A549 (cell line): ENCODE measurements at regions of chr9 and their contacts with region 1.

Region 1: DNA sequence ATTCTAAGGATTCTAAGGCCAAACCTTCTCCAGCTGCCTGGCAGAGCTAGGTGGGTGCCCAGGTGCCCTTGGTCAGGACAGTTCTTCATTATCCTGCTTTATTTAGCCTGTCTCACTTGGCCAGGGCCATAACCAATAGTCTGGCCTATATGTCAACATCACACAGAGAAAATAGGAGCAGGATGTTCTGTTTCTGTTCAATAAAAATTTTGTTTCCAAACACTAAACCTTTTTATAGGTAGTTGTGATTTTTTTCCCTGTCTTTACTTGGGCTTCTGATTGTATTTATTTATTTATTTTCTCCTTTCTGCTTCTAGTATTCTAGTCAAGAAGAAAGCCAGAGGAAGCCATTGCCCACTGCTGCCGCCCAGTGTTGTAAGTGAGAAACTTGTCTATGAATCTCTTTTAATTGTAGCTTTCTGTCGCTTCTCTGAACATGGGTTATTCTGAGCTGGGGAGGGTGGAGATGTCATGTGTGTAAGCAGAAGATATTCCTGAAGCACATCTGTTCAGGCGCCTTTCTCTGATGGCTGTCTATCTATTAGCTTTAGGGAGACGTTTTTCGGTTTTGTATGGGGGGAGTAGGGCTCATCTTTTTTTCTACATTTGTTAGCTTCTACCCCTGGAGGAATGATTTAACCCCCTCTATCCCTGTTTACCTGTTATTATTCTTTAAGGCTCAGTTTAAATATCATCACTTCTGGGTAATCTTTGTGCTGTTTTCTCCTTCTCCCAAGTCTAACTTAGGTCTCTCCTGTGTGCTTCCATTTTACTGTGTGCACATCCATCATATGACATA is 97.1 kb downstream of the UNC13B start:
- DNase-seq: peak; percentile 13 to 75
- ATAC-seq: peak; percentile 68 to 84; a peak in 5 of 6 replicates
- H3K4me3 ChIP-seq: no peak overlapping the region
- H3K27ac ChIP-seq: no peak overlapping the region
- H3K4me1 ChIP-seq: no peaks in the 10 kb centered on the region
- CTCF ChIP-seq: peak; percentile 73
- EP300 ChIP-seq: no peak
- POLR2A ChIP-seq: no peak
- RAD21 ChIP-seq: peak; percentile 76 to 77

Region 2: DNA sequence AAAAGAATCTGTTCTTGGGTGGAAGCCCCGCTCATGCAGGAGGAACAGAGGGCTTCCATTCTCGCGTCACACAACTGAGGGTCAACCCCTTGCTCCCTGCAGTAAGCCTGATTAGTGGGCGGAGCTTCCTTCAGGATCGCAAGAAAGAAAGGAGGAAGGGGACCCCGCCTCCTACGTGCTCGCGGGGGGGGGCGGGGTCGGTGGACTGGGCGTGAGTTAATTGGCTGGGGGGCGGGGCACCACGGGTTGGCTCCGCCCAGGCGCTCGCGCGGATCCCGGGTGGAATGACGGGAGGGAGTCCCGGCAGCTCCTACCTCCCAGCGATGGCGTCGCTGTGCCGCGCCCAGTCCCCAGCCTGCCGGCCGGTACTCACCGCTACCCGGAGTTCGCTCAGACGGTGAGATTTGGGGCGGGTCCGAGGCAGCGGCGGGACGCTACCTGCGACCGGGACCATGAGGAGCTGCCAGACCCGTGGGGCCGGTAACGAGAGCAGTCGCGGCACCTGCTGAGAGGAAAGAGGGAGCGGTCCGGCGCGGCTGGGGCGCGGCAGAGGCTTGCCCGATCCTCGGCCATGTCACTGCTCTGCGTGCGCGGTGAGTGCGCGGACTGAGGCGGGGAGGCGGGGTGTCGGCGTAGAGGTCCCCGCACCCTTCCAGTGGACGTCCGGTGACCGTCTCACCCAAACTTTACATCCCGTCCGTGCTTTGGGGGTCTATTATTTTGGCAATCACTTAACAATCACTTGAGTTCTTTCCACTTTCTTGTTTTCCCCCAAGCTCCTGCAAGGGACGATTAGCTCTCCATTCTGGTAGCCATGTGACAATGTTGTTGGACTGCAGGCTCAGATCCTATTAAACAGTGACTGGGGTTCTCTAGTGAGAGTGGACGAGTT is 96.9 kb before region 1 on chr9 and contains the start of gene UNC13B:
- CTCF ChIA-PET with region 1: interaction called, 10 read pairs
- POLR2A ChIA-PET with region 1: no interaction called
- DNase-seq: peak; percentile 94 to 98
- ATAC-seq: peak; percentile 98 to 99
- H3K4me3 ChIP-seq: peak within 1 kb of the TSS; percentile 62
- H3K27ac ChIP-seq: peak within 1 kb of the TSS; percentile 83 to 91
- H3K4me1 ChIP-seq: peaks cover 8% of the 10 kb centered on the region; the same call in 2 of the 3 replicates
- CTCF ChIP-seq: peak; percentile 13; the same call in 1 of the 3 replicates
- EP300 ChIP-seq: no peak
- POLR2A ChIP-seq: peak; percentile 80
- RAD21 ChIP-seq: no peak
- polyA plus RNA-seq, gene UNC13B: 17.8 and 24.0 TPM in 2 replicates